ENCODE measurements at regions of chr14 and their contacts with region 1.

Region 1: DNA sequence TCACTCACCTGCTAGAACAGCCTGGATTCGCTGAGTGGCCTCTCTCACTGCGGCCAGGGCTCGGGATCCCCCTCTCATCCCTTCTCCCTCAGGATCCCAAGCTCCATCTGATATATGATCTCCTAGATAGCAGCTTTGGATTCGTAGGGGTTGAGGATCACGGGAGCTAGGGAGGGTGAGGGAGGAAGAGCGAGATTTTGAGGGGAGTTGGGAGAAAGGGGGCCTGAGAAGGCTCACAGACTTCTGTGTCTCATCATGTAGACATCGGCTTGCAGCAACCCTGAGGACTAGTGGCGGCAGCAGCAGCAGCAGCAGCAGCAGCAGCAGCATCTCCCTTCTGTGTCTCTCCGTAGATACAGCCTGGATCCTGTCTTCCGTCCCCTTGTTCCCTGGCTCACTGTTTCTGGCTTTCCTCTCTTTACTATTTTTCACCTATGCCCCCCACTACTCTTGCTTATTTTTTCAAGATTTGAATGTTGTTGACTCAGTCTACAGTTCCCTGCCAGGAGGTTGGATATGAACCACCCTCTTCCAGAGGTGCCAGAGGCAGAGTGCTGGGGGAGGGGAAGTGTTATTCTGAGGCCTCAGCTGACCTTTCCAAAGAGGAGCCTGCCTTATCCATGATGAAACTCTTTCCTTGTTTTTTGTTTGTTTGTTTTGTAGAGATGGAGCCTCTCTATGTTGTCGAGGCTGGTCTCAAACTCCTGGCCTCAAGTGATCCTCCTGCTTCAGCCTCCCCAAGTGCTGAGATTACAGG is at the start of gene CIROP:
- DNase-seq: no peak
- H3K4me3 ChIP-seq: no peak within 1 kb of the TSS
- H3K4me3 Mint-ChIP-seq: peak within 1 kb of the TSS in 1 of 2 donors; percentile 49
- H3K27ac ChIP-seq: peak within 1 kb of the TSS in 1 of 2 donors; percentile 41
- H3K27ac Mint-ChIP-seq: peak within 1 kb of the TSS; percentile 8 to 85 (median 69)
- H3K4me1 ChIP-seq: peaks cover 12 to 17% of the 10 kb centered on the region in 2 donors
- H3K4me1 Mint-ChIP-seq: peaks cover 29% of the 10 kb centered on the region
- H3K27me3 ChIP-seq: no peaks in the 10 kb centered on the region
- H3K27me3 Mint-ChIP-seq: peaks cover 1 to 4% (median 1%) of the 10 kb centered on the region in 3 donors
- CTCF ChIP-seq: no peak
- polyA plus RNA-seq, gene CIROP: not detected

Region 2: DNA sequence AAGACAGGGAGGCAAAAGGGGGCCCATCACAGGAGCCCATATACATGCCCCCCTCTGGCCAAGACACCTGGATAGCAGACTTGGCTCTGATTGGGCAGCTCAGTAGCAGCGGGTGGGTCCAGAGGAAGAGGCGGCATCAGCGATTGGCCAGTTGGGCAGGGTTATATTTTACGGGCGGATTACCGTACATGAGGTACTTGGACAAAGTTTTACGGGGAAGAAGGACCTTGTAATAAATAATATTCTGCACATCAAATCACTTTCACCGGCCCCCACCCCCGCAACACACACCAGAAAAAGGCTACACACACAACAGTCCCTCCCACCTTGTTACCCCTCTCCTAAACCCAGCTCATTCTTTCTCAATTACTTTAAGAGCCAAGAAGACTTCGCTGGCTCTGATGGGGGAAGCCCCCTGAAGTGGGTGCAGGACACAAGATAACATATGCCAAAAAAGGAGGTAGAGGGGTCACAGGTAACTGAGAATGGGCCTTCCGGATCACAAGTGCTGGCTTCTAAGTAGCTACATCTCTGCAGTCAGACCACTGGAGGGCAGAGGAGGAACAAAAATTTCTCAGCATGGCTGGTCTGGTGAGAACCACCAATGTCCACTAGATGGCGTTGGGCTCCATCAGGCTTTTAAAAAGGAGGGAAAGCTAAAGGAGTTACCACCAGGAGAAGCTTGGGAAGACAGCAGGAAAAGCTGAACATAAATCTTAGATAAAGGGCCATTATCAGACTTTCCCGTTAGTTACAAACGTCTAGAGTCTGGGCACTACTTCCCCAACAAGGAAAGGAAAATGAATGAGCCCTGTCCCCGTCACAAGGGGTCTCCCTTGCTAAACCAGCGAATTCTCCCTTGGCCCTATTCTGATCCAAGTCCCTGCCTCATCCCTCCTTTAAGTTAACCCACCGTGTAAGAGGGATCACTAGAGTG is 36.0 kb before region 1 on chr14:
- intact Hi-C with region 1: loop called in 1 of 2 experiments (anchors 5 kb)
- DNase-seq: peak; percentile 76 to 87 (median 80)
- H3K4me3 ChIP-seq: no peak overlapping the region
- H3K4me3 Mint-ChIP-seq: no peak overlapping the region
- H3K27ac ChIP-seq: peak overlapping the region in 1 of 2 donors; percentile 2
- H3K27ac Mint-ChIP-seq: peak overlapping the region in 6 of 7 donors; percentile 61 to 90 (median 69)
- H3K4me1 ChIP-seq: peaks cover 31 to 39% of the 10 kb centered on the region in 2 donors
- H3K4me1 Mint-ChIP-seq: peaks cover 35% of the 10 kb centered on the region
- H3K27me3 ChIP-seq: no peaks in the 10 kb centered on the region
- H3K27me3 Mint-ChIP-seq: no peaks in the 10 kb centered on the region
- CTCF ChIP-seq: peak; percentile 100

Region 3: GRCh38 chr14:23160924-23161538 is 56.3 kb after region 1 on chr14:
- intact Hi-C with region 1: no loop called
- DNase-seq: peak; percentile 87 to 94 (median 88)
- H3K4me3 ChIP-seq: peak overlapping the region in 1 of 3 experiments; percentile 50
- H3K4me3 Mint-ChIP-seq: peak overlapping the region; percentile 70 to 83
- H3K27ac ChIP-seq: peak overlapping the region; percentile 95 to 97
- H3K27ac Mint-ChIP-seq: peak overlapping the region; percentile 99
- H3K4me1 ChIP-seq: peaks cover 40 to 41% of the 10 kb centered on the region in 2 donors
- H3K4me1 Mint-ChIP-seq: peaks cover 42% of the 10 kb centered on the region
- H3K27me3 ChIP-seq: no peaks in the 10 kb centered on the region
- H3K27me3 Mint-ChIP-seq: peaks cover 0 to 3% (median 1%) of the 10 kb centered on the region in 3 donors
- CTCF ChIP-seq: no peak

Measured in CD14-positive monocyte (primary cell).